WTC11 (cell line): ENCODE measurements at regions of chr13 and their contacts with region 1.

Region 1: GRCh38 chr13:99028890-99029289 is 51.0 kb upstream of the DOCK9 start:
- DNase-seq: peak; percentile 59
- ATAC-seq: peak; percentile 94
- H3K4me3 Mint-ChIP-seq: no peak overlapping the region
- H3K27ac Mint-ChIP-seq: no peak overlapping the region
- H3K4me1 Mint-ChIP-seq: peaks cover 2% of the 10 kb centered on the region; the same call in 1 of the 2 replicates
- H3K27me3 Mint-ChIP-seq: no peaks in the 10 kb centered on the region
- CTCF ChIP-seq: peak; percentile 33

Region 2: DNA sequence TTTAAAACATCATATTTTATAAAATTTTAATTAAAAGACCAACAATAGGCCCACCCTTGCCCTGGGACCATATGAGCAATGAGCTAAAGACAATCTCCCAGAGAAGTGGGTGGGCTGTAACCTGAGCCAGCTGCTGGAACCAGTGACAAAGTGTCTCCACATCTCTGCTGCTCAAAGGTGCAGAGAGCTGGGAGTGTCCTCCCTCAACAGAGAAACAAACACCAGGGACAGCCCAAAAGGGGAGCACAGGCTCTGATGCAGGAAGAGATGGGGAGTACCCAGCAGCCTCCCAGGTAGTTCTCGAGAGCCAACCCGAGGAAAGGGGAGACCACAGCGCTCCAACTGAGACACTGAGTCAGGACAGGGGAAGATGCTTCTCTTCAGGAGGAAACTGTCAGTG is 90.1 kb before region 1 on chr13:
- CTCF ChIA-PET with region 1: interaction called, 13 read pairs
- POLR2A ChIA-PET with region 1: no interaction called
- DNase-seq: peak; percentile 40
- ATAC-seq: peak; percentile 73
- H3K4me3 Mint-ChIP-seq: no peak overlapping the region
- H3K27ac Mint-ChIP-seq: peak overlapping the region; percentile 88
- H3K4me1 Mint-ChIP-seq: peaks cover 42% of the 10 kb centered on the region
- H3K27me3 Mint-ChIP-seq: no peaks in the 10 kb centered on the region
- CTCF ChIP-seq: no peak

Region 3: GRCh38 chr13:98977568-98978265 is 51.2 kb before region 1 on chr13 and contains the start of gene DOCK9:
- CTCF ChIA-PET with region 1: interaction called, 22 read pairs
- POLR2A ChIA-PET with region 1: no interaction called
- DNase-seq: peak; percentile 31
- ATAC-seq: peak; percentile 87
- H3K4me3 Mint-ChIP-seq: no peak within 1 kb of the TSS
- H3K27ac Mint-ChIP-seq: peak within 1 kb of the TSS; percentile 79; the same call in 1 of the 2 replicates
- H3K4me1 Mint-ChIP-seq: peaks cover 43% of the 10 kb centered on the region
- H3K27me3 Mint-ChIP-seq: no peaks in the 10 kb centered on the region
- CTCF ChIP-seq: no peak
- total RNA-seq, gene DOCK9: 35.0 to 36.6 TPM (median 36.0 TPM) in 3 replicates

Region 4: DNA sequence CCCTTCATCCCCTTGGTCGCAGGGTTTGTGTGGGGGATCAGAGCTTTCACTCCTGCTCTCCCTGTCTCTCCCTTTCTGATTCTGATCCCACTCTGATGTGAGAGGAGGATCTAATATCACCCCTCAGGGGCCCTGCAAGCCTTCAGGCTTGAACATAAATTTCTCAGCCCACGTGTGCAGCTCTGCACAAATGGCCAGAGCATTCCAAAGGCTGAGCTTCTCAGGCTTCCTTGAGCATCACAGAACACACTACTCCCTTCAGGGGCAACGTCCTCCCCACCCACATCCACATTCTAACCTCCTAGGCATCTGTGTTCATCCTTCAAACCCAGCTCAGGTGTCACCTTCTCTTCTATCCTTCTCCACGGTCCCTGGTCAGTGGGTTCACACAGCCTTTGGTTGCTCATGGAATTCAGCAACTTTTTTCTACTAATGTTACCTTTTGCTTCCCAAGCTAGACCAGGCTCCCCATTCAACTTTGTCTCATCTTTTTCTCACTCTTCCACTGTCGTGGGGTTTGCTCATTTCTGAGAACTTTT is 26.6 kb before region 1 on chr13:
- CTCF ChIA-PET with region 1: interaction called, 14 read pairs
- POLR2A ChIA-PET with region 1: no interaction called
- DNase-seq: no peak
- ATAC-seq: no peak
- H3K4me3 Mint-ChIP-seq: no peak overlapping the region
- H3K27ac Mint-ChIP-seq: no peak overlapping the region
- H3K4me1 Mint-ChIP-seq: peaks cover 37% of the 10 kb centered on the region
- H3K27me3 Mint-ChIP-seq: no peaks in the 10 kb centered on the region
- CTCF ChIP-seq: no peak

Region 5: DNA sequence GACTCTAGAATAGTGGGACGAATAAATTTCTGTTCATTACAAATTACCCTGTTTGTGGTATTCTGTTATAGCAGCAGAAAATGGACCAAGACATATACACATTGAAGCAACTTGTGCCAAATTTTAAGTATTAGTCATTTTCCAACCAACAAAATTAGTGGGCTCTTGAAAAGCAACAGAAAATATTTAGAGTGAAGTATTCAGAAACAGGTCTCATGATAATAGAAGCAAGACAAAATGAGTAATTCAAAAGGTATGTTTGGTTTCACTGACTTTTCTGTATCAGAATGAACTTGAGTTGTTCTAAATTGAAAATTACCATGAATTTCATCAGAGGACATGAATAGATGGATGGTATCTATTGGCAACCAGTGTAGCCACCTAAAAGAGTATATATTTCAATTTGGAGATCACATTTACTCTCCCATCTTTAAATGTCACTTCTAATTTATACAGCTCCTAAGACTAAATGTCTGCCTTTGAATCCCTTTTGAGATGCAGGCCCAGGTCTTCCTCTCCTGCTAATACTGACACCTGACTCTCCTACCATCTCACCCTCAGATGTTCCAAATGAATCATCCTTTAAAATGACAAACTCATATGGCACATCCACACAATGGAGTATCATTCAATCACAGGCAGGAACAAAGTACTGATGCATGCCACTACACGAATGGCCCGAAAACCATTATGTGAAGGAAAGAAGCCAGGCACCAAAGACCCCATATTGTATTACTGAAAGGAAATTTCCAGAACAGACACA is 10.3 kb before region 1 on chr13:
- CTCF ChIA-PET with region 1: interaction called, 15 read pairs
- POLR2A ChIA-PET with region 1: no interaction called
- DNase-seq: no peak
- ATAC-seq: no peak
- H3K4me3 Mint-ChIP-seq: no peak overlapping the region
- H3K27ac Mint-ChIP-seq: no peak overlapping the region
- H3K4me1 Mint-ChIP-seq: peaks cover 14% of the 10 kb centered on the region
- H3K27me3 Mint-ChIP-seq: no peaks in the 10 kb centered on the region
- CTCF ChIP-seq: no peak

Region 6: GRCh38 chr13:99051768-99052455 is 23.0 kb after region 1 on chr13:
- CTCF ChIA-PET with region 1: interaction called, 13 read pairs
- POLR2A ChIA-PET with region 1: no interaction called
- DNase-seq: no peak
- ATAC-seq: no peak
- H3K4me3 Mint-ChIP-seq: no peak overlapping the region
- H3K27ac Mint-ChIP-seq: 0 out of 2 replicates have a peak overlapping the region, but pooled peaks have one; percentile 2
- H3K4me1 Mint-ChIP-seq: peaks cover 41% of the 10 kb centered on the region
- H3K27me3 Mint-ChIP-seq: no peaks in the 10 kb centered on the region
- CTCF ChIP-seq: no peak

Region 7: GRCh38 chr13:99200432-99201167 is 171.7 kb after region 1 on chr13 and contains the start of gene UBAC2:
- CTCF ChIA-PET with region 1: no interaction called
- POLR2A ChIA-PET with region 1: no interaction called
- DNase-seq: peak; percentile 95
- ATAC-seq: peak; percentile 83
- H3K4me3 Mint-ChIP-seq: peak within 1 kb of the TSS; percentile 92
- H3K27ac Mint-ChIP-seq: peak within 1 kb of the TSS; percentile 97
- H3K4me1 Mint-ChIP-seq: peaks cover 49% of the 10 kb centered on the region
- H3K27me3 Mint-ChIP-seq: no peaks in the 10 kb centered on the region
- CTCF ChIP-seq: no peak
- total RNA-seq, gene UBAC2: 64.7 to 72.4 TPM (median 71.3 TPM) in 3 replicates